Sciatic nerve (tissue), 2 donors: ENCODE measurements at regions of chr9 and their contacts with region 1.

Region 1: GRCh38 chr9:94213511-94214124 is 45.5 kb upstream of the ZNF169 start:
- DNase-seq: peak; percentile 82
- ATAC-seq: peak; percentile 98

Region 2: DNA sequence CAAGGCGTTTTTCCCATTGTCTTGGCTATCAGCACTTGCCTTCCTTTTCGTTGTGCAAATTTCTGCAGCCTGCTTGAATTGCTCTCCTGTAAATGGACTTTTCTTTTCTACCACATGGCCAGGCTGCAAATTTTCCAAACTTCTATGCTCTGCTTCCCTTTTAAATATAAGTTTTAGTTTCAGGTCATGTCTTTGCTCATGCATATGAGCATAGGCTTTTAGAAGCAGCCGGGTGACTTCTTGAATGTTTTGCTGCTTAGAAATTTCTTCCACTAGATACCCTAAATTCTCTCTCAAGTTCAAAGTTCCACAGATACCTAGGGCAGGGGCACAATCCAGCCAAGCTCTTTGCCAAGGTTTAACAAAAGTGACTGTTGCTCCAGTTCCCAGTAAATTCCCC is 151.8 kb before region 1 on chr9:
- intact Hi-C with region 1: loop called (anchors 5 kb)
- DNase-seq: no peak
- ATAC-seq: no peak

Region 3: GRCh38 chr9:95305770-95306492 is 1092.3 kb after region 1 on chr9:
- intact Hi-C with region 1: no loop called
- DNase-seq: no peak
- ATAC-seq: no peak